Left ventricle myocardium superior (tissue), 1 donor: ENCODE measurements at regions of chr2 and their contacts with region 1.

Region 1: GRCh38 chr2:168455648-168456520 is at the start of gene CERS6:
- DNase-seq: peak; percentile 99
- ATAC-seq: peak; percentile 97
- total RNA-seq, gene CERS6: 71.7 TPM

Region 2: DNA sequence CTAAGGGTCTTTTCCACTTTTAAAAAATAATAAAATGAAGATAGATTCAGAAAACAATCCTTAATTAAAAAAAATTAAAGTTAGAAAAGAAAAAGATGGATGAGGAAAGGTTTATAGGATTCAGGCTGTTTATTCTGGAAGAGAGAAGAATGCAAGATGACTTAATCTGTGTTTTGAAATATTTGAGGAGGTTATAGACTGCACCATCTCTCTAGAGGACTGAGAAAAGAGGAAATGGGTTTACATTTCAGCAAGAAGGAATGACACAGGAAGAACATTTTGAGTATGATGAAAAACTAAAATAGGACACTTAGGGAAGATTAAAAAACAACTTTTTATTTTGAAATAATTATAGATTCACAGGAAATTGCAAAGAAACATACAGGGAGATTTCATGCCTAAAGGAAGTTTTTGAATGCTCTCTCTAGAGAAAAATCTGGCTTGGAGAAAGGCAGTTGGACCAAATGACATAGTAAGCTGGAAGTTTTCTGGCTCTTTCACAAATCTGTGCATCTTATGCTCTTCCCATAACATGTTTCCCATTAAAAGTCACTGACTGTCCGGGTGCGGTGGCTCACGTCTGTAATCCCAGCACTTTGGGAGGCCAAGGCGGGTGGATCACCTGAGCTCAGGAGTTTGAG is 75.2 kb after region 1 on chr2:
- intact Hi-C with region 1: loop called (anchors 2 kb)
- DNase-seq: no peak
- ATAC-seq: no peak

Region 3: DNA sequence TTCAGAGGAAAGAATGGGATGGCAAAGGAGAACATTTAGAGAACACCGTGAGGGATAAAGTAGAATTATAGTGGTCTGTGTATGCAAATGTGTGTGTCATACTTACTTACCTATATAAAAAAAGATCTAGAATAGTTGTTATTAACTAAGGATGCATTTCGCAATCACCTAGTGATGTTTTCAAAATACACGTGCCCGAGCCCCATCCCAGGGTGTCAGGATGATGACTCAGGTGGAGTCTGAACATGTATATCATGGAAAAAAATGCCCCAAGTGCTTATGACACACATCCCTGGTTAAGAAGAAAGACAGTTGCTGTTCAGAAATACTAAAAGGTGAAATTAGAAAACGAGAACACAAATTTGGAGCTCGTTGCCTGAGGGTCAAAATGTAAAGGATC is 109.2 kb after region 1 on chr2:
- intact Hi-C with region 1: no loop called
- DNase-seq: no peak
- ATAC-seq: no peak

Region 4: DNA sequence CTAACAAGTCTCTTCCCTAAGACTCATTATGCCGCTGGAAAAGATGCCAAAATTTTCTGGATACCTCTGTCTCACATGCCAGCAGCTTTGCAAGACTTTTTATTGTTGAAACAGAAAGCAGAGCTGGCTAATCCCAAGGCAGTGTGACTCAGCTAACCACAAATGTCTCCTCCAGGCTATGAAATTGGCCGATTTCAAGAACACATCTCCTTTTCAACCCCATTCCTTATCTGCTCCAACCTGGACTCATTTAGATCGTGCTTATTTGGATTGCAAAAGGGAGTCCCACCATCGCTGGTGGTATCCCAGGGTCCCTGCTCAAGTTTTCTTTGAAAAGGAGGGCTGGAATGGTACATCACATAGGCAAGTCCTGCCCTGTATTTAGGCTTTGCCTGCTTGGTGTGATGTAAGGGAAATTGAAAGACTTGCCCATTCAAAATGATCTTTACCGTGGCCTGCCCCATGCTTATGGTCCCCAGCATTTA is 639.8 kb after region 1 on chr2:
- intact Hi-C with region 1: no loop called
- DNase-seq: no peak
- ATAC-seq: peak; percentile 51